ENCODE measurements at regions of chr9 and their contacts with region 1.

Region 1: DNA sequence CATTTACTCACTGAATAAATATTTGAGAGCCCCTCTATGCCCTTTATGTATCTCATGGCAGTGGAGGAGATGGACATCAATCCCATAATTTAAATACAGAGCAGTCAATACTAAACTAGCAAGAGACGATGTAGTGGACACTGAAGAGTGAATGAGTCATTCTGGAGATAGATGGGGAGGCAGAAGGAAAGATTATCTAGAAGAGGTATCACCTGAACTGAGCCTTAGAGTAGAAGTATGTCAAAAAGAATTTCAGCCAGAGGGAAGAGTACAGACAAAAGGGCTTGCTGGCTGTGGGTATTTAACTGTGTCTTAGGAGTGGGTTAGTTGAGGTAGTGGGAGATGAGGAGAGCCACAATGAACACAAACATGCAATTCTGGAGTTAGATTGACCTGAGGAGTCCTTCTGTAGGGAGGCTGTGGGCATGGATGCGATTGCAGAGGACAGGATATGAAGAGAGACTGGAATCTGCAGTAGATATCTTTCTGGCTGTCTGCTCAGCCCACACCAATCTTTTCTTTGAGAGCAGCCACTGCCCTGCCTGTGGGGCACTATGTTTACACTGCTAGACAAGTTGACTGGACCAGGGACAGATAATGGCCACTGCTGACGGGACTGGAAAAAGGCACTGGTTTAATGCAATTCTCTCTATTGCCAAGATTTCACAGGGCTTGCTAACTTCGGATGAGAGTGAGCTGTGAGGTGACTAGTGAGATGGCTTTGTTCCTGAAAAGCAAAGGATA is 63.9 kb upstream of the NR5A1 start:
- DNase-seq: no peak
- H3K4me3 ChIP-seq: no peak overlapping the region
- H3K27ac ChIP-seq: no peak overlapping the region
- H3K4me1 ChIP-seq: peaks cover 19% of the 10 kb centered on the region
- H3K27me3 ChIP-seq: no peaks in the 10 kb centered on the region
- CTCF ChIP-seq: no peak

Region 2: GRCh38 chr9:123863164-123863855 is 707.8 kb before region 1 on chr9:
- CTCF ChIA-PET with region 1: no interaction called
- POLR2A ChIA-PET with region 1: no interaction called
- intact Hi-C with region 1: no loop called
- DNase-seq: no peak
- H3K4me3 ChIP-seq: no peak overlapping the region
- H3K27ac ChIP-seq: no peak overlapping the region
- H3K4me1 ChIP-seq: no peaks in the 10 kb centered on the region
- H3K27me3 ChIP-seq: no peaks in the 10 kb centered on the region
- CTCF ChIP-seq: no peak

Region 3: GRCh38 chr9:124559862-124560261 is 11.2 kb before region 1 on chr9:
- CTCF ChIA-PET with region 1: interaction called, 6 read pairs
- POLR2A ChIA-PET with region 1: no interaction called
- intact Hi-C with region 1: loop called (anchors 1 kb)
- DNase-seq: peak; percentile 21 to 90
- H3K4me3 ChIP-seq: no peak overlapping the region
- H3K27ac ChIP-seq: no peak overlapping the region
- H3K4me1 ChIP-seq: peaks cover 17% of the 10 kb centered on the region
- H3K27me3 ChIP-seq: no peaks in the 10 kb centered on the region
- CTCF ChIP-seq: no peak

Region 4: DNA sequence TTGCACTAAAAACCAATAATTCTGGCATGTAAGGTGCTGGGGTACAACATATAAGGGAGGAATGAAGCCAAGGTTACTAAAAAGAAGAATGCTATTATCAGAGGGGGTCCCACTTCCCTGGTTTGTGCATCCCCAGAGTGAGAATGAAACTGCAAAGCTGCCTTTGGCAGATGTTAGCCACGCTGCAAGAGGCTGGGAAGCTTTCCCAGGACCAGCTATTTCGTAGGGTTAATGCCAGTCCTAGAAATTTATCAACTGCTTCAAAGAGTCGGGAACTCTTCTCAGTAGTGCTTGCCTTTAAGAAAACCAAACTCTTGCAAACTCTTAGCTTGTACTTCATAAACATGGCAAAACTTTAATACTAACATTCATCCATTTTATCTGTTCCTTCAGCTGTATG is 23.6 kb after region 1 on chr9:
- CTCF ChIA-PET with region 1: no interaction called
- POLR2A ChIA-PET with region 1: no interaction called
- intact Hi-C with region 1: loop called (anchors 1 kb)
- DNase-seq: no peak
- H3K4me3 ChIP-seq: no peak overlapping the region
- H3K27ac ChIP-seq: no peak overlapping the region
- H3K4me1 ChIP-seq: peaks cover 27% of the 10 kb centered on the region
- H3K27me3 ChIP-seq: no peaks in the 10 kb centered on the region
- CTCF ChIP-seq: no peak

Region 5: GRCh38 chr9:124635285-124635684 is 64.2 kb after region 1 on chr9:
- CTCF ChIA-PET with region 1: no interaction called
- POLR2A ChIA-PET with region 1: no interaction called
- intact Hi-C with region 1: no loop called
- DNase-seq: no peak
- H3K4me3 ChIP-seq: no peak overlapping the region
- H3K27ac ChIP-seq: no peak overlapping the region
- H3K4me1 ChIP-seq: no peaks in the 10 kb centered on the region
- H3K27me3 ChIP-seq: no peaks in the 10 kb centered on the region
- CTCF ChIP-seq: no peak

Measured in PC-9 (cell line).